ENCODE measurements at regions of chr3 and their contacts with region 1.

Region 1: DNA sequence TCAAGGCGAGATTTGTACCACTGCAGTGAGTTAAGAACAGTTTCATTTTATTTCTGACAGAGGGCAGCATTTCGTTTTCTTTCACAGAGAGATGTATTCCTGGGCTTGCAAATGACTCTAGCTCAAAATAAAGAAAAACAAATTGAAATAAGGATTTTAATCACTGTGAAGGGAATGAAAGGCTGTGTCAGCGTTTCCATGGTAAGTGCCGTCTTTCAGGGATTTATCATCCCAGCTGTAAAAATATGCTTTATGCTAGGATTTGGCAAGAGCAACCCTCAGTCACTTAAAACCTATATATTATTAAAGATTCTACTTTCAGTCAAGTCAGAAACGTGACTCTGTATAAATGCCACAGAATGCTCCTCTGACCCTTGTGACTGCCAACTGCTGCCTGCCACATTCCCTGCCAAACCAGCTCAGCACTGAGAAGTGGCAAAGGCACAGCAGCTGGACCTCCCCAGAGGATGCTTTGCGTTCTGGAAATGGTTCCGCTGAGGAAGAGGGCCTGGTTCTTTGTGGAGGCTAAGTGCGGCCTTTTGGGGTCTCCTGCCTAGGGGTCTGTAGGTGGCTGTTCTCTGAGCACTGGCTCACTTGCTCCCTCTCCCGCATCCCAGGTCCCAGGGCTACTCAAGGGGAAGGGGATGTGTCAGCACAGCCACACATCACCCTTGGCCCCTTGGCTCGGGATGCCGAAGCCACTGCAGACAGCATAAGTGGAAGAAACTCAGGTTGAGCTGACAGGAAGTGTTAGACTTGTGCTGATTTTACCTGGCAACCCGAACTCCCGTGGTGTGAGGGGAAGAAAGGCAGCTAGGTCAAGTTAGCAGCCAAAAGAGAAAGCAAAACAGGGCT is 56.6 kb upstream of the POMGNT2 start:
- DNase-seq: peak; percentile 78
- ATAC-seq: peak; percentile 87
- H3K4me3 Mint-ChIP-seq: peak overlapping the region; percentile 62
- H3K27ac Mint-ChIP-seq: peak overlapping the region; percentile 98
- H3K4me1 Mint-ChIP-seq: peaks cover 20% of the 10 kb centered on the region
- H3K27me3 Mint-ChIP-seq: no peaks in the 10 kb centered on the region

Region 2: GRCh38 chr3:43223670-43224364 is 61.4 kb after region 1 on chr3:
- CTCF ChIA-PET with region 1: interaction called, 14 read pairs
- DNase-seq: no peak
- ATAC-seq: no peak
- H3K4me3 Mint-ChIP-seq: no peak overlapping the region
- H3K27ac Mint-ChIP-seq: no peak overlapping the region
- H3K4me1 Mint-ChIP-seq: peaks cover 8% of the 10 kb centered on the region
- H3K27me3 Mint-ChIP-seq: no peaks in the 10 kb centered on the region

Region 3: DNA sequence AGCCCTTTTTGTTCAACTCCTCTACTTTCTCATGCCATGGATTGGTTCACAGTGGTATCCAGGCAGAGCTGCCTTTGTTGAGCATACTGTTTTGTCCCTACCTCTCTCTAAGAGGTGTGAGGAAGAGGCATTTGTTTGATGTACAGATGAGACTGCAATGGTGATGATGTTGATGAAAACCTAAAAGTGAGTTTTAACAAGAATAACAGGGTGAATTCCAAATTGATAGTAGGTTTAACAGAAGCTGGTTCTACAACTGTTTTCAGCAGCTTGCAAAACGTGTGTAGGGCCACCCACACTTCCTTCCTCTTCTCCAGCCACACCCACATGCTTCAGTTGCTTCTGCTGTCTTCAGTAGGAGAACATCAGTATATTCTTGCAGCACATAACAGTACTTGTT is 134.1 kb after region 1 on chr3:
- CTCF ChIA-PET with region 1: interaction called, 22 read pairs
- DNase-seq: peak; percentile 81
- ATAC-seq: peak; percentile 93
- H3K4me3 Mint-ChIP-seq: peak overlapping the region; percentile 74
- H3K27ac Mint-ChIP-seq: peak overlapping the region; percentile 87
- H3K4me1 Mint-ChIP-seq: peaks cover 73% of the 10 kb centered on the region
- H3K27me3 Mint-ChIP-seq: no peaks in the 10 kb centered on the region

Region 4: GRCh38 chr3:43378066-43378935 is 215.8 kb after region 1 on chr3:
- CTCF ChIA-PET with region 1: interaction called, 62 read pairs
- DNase-seq: peak; percentile 80
- ATAC-seq: peak; percentile 94
- H3K4me3 Mint-ChIP-seq: no peak overlapping the region
- H3K27ac Mint-ChIP-seq: peak overlapping the region; percentile 18
- H3K4me1 Mint-ChIP-seq: peaks cover 11% of the 10 kb centered on the region
- H3K27me3 Mint-ChIP-seq: no peaks in the 10 kb centered on the region

Region 5: GRCh38 chr3:43503067-43503728 is 340.7 kb after region 1 on chr3:
- CTCF ChIA-PET with region 1: interaction called, 38 read pairs
- DNase-seq: no peak
- ATAC-seq: no peak
- H3K4me3 Mint-ChIP-seq: no peak overlapping the region
- H3K27ac Mint-ChIP-seq: no peak overlapping the region
- H3K4me1 Mint-ChIP-seq: peaks cover 24% of the 10 kb centered on the region
- H3K27me3 Mint-ChIP-seq: no peaks in the 10 kb centered on the region